ENCODE measurements at regions of chr3 and their contacts with region 1.

Region 1: GRCh38 chr3:132029182-132029902 is 5.5 kb downstream of the CPNE4 start:
- H3K4me3 Mint-ChIP-seq: no peak overlapping the region
- H3K27ac Mint-ChIP-seq: no peak overlapping the region
- H3K4me1 Mint-ChIP-seq: peaks cover 9% of the 10 kb centered on the region
- H3K27me3 Mint-ChIP-seq: peaks cover 34% of the 10 kb centered on the region

Region 2: DNA sequence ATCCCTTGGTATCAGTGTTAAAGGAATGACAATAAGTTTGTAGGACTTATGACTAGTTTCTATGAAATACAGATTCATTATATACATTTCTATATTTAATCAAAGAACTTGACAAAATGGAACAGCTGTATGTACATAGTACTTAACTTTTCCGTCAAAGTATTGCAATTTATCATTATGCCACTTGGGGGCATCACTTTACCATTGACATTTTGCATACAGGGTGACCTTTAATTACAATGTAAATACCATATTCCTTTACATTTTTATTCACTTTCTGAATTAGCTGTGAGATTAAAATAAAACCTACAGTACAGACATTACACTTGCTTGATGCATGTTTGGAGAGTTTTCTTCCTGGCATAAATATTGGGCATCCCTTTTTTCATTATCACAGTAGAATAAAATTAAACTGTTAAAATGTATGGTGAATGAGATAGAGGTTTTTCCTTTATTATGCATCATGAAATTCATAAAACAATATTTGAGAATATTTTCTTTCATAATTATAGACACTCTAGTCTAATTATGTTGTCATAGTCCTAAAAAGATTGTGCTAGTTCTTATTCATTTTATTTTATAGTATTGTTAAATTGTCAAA is 995.8 kb before region 1 on chr3:
- intact Hi-C with region 1: loop called (anchors 2 kb)
- H3K4me3 Mint-ChIP-seq: no peak overlapping the region
- H3K27ac Mint-ChIP-seq: no peak overlapping the region
- H3K4me1 Mint-ChIP-seq: peaks cover 5% of the 10 kb centered on the region
- H3K27me3 Mint-ChIP-seq: no peaks in the 10 kb centered on the region

Region 3: DNA sequence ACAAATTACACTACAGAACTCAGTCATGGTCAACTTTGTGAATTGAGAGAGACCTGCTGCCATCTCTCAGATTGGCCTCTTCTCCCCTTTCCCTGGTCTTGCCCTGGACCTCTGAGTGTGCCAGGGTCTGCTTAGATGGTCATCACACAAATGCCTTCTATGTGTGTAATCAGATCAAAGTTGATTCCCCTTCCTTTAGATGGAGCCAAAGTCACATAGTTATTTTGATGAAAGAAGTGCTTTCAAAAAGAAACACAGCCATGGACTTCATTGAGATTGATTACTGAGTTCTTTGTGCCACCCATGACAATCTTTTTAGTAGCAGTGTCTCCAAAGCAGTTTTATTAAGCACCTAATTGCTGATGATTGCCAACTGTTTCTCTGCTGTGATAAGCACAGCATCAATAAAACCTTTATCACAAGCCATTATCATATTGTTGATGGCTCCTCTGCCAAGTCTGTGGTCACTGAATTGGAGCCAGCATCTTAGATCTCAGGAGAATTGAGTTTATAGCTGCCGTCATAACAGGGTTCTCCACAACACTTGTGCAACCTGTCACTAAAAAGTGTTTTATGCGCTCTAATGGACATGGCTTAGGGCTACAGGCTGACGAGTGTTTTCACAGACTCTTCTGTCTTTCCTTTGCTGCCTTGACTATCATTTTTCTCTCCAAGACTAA is 797.5 kb before region 1 on chr3:
- intact Hi-C with region 1: loop called (anchors 1 kb)
- H3K4me3 Mint-ChIP-seq: no peak overlapping the region
- H3K27ac Mint-ChIP-seq: no peak overlapping the region
- H3K4me1 Mint-ChIP-seq: no peaks in the 10 kb centered on the region
- H3K27me3 Mint-ChIP-seq: no peaks in the 10 kb centered on the region

Region 4: DNA sequence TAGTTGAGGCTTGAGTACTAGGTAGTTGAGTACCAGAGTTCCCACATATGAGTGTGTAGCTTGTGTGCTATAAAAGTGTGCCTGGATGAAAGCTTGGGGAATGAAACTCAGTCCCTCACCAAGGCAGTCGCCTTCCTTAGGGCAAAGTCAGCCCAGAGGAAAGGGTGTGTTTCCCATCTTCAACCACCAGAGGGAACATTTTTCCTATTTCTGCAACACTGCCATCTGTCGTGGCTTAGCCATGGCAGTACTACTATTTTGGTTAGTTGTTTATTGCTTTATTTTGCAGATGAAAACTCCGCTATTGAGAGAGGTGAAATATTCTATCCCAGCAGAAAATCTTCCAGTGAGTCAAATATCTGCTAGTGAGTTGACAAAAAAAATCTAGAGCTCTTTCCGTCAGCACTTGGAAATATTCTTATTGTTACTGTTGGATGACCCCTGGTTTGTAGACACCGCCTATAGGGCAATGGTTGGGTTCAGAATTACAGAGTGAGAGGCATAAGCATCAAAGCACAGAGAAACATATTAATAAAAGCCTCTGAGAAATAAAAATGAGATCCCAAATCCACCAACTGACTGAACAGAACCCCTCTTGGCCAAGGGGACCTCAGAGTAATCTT is 234.5 kb before region 1 on chr3:
- intact Hi-C with region 1: loop called (anchors 1 kb)
- H3K4me3 Mint-ChIP-seq: no peak overlapping the region
- H3K27ac Mint-ChIP-seq: no peak overlapping the region
- H3K4me1 Mint-ChIP-seq: peaks cover 14% of the 10 kb centered on the region
- H3K27me3 Mint-ChIP-seq: no peaks in the 10 kb centered on the region